Activated T-helper 2 cell treated with anti-CD3 and anti-CD28 coated beads, Interferon-gamma antibody, Interleukin-2, Interleukin-4, amounts not matched to agents 10 μg/mL and 5 μg/mL and 100 μg/mL, durations not matched to agents 14 hours and 24 hours and 36 hours (primary cell): ENCODE measurements at regions of chr3 and their contacts with region 1.

Region 1: GRCh38 chr3:30012941-30013543 is 593.4 kb upstream of the TGFBR2 start:
- DNase-seq: no peak
- H3K4me3 Mint-ChIP-seq: no peak overlapping the region
- H3K27ac Mint-ChIP-seq: no peak overlapping the region
- H3K4me1 Mint-ChIP-seq: peaks cover 6% of the 10 kb centered on the region
- H3K27me3 Mint-ChIP-seq: peaks cover 4% of the 10 kb centered on the region

Region 2: DNA sequence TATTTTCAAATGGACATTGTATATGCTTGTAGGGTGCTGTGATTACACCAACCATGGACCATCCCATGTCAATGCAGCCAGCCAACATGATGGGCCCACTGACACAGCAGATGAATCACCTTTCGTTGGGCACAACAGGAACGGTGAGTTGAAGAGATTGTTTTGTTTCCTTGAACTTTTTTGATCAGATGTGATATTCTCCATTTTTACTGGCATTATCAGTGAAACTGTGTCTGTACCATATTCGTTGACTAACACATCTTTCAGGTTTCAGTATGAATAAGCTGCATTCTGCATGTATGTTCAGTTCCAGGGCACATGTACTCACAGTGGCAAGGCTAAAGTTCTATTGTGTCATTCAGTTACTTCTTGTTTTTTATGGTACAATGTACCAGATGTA is 77.0 kb before region 1 on chr3:
- intact Hi-C with region 1: loop called (anchors 5 kb)
- DNase-seq: no peak
- H3K4me3 Mint-ChIP-seq: no peak overlapping the region
- H3K27ac Mint-ChIP-seq: peak overlapping the region; percentile 65
- H3K4me1 Mint-ChIP-seq: peaks cover 27% of the 10 kb centered on the region
- H3K27me3 Mint-ChIP-seq: peaks cover 15% of the 10 kb centered on the region

Region 3: GRCh38 chr3:30289324-30289723 is 276.3 kb after region 1 on chr3:
- intact Hi-C with region 1: no loop called
- DNase-seq: no peak
- H3K4me3 Mint-ChIP-seq: no peak overlapping the region
- H3K27ac Mint-ChIP-seq: no peak overlapping the region
- H3K4me1 Mint-ChIP-seq: peaks cover 24% of the 10 kb centered on the region
- H3K27me3 Mint-ChIP-seq: no peaks in the 10 kb centered on the region